H1 (cell line): ENCODE measurements at regions of chr5 and their contacts with region 1.

Region 1: DNA sequence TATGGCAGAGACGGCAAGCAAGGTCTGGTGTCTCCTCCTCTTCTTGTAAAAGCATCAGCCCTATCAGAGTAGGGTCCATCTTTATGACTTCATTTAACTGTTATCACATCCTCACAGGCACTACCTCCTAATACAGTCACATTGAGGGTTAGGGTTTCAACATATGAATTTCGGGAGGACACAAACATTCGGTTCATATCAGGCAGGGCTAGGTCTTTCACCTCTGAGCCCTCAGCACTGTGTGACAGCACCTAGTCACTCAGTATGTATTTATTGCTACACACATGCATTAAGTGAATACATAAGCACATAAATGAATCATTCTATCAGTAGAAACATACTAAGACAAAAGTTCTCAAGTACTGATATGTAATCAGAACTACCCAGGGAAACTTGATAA is 9.4 kb upstream of the BTF3 start:
- DNase-seq: no peak
- H3K4me3 ChIP-seq: no peak overlapping the region
- H3K27ac ChIP-seq: peak overlapping the region; percentile 73
- H3K4me1 ChIP-seq: peaks cover 11 to 19% (median 15%) of the 10 kb centered on the region in 4 experiments
- H3K27me3 ChIP-seq: no peaks in the 10 kb centered on the region
- CTCF ChIP-seq: no peak
- EP300 ChIP-seq: no peak
- POLR2A ChIP-seq: no peak
- RAD21 ChIP-seq: no peak

Region 2: GRCh38 chr5:73507062-73507461 is 18.3 kb after region 1 on chr5:
- CTCF ChIA-PET with region 1: interaction called, 4 read pairs
- POLR2A ChIA-PET with region 1: interaction called, 19 read pairs
- DNase-seq: no peak
- H3K4me3 ChIP-seq: no peak overlapping the region
- H3K27ac ChIP-seq: no peak overlapping the region
- H3K4me1 ChIP-seq: no peaks in the 10 kb centered on the region
- H3K27me3 ChIP-seq: no peaks in the 10 kb centered on the region
- CTCF ChIP-seq: no peak
- EP300 ChIP-seq: no peak
- POLR2A ChIP-seq: peak in 1 of 2 experiments; percentile 3; a peak in 1 of 3 replicates
- RAD21 ChIP-seq: no peak

Region 3: GRCh38 chr5:73831066-73831465 is 342.3 kb after region 1 on chr5:
- CTCF ChIA-PET with region 1: no interaction called
- POLR2A ChIA-PET with region 1: no interaction called
- DNase-seq: no peak
- H3K4me3 ChIP-seq: no peak overlapping the region
- H3K27ac ChIP-seq: no peak overlapping the region
- H3K4me1 ChIP-seq: no peaks in the 10 kb centered on the region
- H3K27me3 ChIP-seq: no peaks in the 10 kb centered on the region
- CTCF ChIP-seq: no peak
- EP300 ChIP-seq: no peak
- POLR2A ChIP-seq: no peak
- RAD21 ChIP-seq: no peak

Region 4: GRCh38 chr5:74231697-74232096 is 742.9 kb after region 1 on chr5:
- CTCF ChIA-PET with region 1: no interaction called
- POLR2A ChIA-PET with region 1: no interaction called
- DNase-seq: no peak
- H3K4me3 ChIP-seq: no peak overlapping the region
- H3K27ac ChIP-seq: no peak overlapping the region
- H3K4me1 ChIP-seq: no peaks in the 10 kb centered on the region
- H3K27me3 ChIP-seq: no peaks in the 10 kb centered on the region
- CTCF ChIP-seq: no peak
- EP300 ChIP-seq: no peak
- POLR2A ChIP-seq: no peak
- RAD21 ChIP-seq: no peak